Activated B cell treated with CpG ODN at 0.5 μM for 24 hours (primary cell): ENCODE measurements at regions of chr15 and their contacts with region 1.

Region 1: GRCh38 chr15:99565299-99566156 is at the start of gene MEF2A:
- DNase-seq: peak; percentile 90
- ATAC-seq: peak; percentile 65
- H3K4me3 Mint-ChIP-seq: peak within 1 kb of the TSS; percentile 100
- H3K27ac Mint-ChIP-seq: peak within 1 kb of the TSS; percentile 99
- H3K4me1 Mint-ChIP-seq: peaks cover 55% of the 10 kb centered on the region
- H3K27me3 Mint-ChIP-seq: no peaks in the 10 kb centered on the region
- CTCF ChIP-seq: no peak
- total RNA-seq, gene MEF2A: 75.7 and 88.3 TPM in 2 replicates

Region 2: DNA sequence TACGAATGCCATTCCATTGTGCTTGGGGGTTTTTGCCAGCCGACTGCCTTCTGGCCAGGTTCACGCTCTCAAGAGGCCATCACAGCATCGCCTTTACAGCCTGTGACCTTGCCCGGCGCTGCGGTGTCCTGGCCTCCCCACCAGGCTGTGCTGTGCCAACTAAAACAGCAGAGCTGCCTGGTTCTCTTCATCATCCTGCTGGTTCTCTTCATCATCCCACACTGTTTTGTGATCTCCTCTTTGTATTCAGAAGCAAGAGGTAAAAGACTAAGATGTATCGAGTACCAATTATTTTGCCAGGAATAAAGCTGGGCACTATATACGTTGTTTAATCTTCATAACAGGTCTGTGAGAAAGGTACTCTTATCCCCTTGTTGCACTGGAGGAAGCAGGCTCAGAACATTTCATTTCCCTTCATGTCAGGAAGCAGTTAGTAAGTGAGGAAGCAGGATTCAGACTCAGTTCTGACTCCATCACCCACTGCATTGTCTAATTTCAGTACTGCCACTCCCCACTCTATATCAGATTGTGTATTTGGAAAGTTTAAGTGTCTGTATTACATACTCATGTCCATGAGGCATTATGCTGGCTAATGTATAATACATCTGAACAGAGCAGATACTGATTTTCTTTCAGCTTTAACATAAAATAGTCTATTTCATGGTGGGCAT is 221.5 kb before region 1 on chr15:
- CTCF ChIA-PET with region 1: no interaction called
- POLR2A ChIA-PET with region 1: interaction called, 6 read pairs
- intact Hi-C with region 1: loop called (anchors 1 kb)
- DNase-seq: peak; percentile 20
- ATAC-seq: peak; percentile 61
- H3K4me3 Mint-ChIP-seq: no peak overlapping the region
- H3K27ac Mint-ChIP-seq: no peak overlapping the region
- H3K4me1 Mint-ChIP-seq: peaks cover 31% of the 10 kb centered on the region
- H3K27me3 Mint-ChIP-seq: no peaks in the 10 kb centered on the region
- CTCF ChIP-seq: no peak

Region 3: GRCh38 chr15:99476413-99477222 is 88.9 kb before region 1 on chr15:
- CTCF ChIA-PET with region 1: no interaction called
- POLR2A ChIA-PET with region 1: interaction called, 14 read pairs
- intact Hi-C with region 1: no loop called
- DNase-seq: peak; percentile 60
- ATAC-seq: peak; percentile 84
- H3K4me3 Mint-ChIP-seq: peak overlapping the region; percentile 11
- H3K27ac Mint-ChIP-seq: peak overlapping the region; percentile 31
- H3K4me1 Mint-ChIP-seq: peaks cover 52% of the 10 kb centered on the region
- H3K27me3 Mint-ChIP-seq: no peaks in the 10 kb centered on the region
- CTCF ChIP-seq: no peak

Region 4: GRCh38 chr15:99507504-99508310 is 57.8 kb before region 1 on chr15:
- CTCF ChIA-PET with region 1: interaction called, 24 read pairs
- POLR2A ChIA-PET with region 1: interaction called, 247 read pairs
- intact Hi-C with region 1: loop called (anchors 1 kb)
- DNase-seq: no peak
- ATAC-seq: no peak
- H3K4me3 Mint-ChIP-seq: peak overlapping the region; percentile 50
- H3K27ac Mint-ChIP-seq: peak overlapping the region; percentile 97
- H3K4me1 Mint-ChIP-seq: peaks cover 96% of the 10 kb centered on the region
- H3K27me3 Mint-ChIP-seq: no peaks in the 10 kb centered on the region
- CTCF ChIP-seq: no peak

Region 5: GRCh38 chr15:99613887-99614647 is 48.5 kb after region 1 on chr15:
- CTCF ChIA-PET with region 1: no interaction called
- POLR2A ChIA-PET with region 1: interaction called, 7 read pairs
- intact Hi-C with region 1: loop called (anchors 1 kb)
- DNase-seq: no peak
- ATAC-seq: no peak
- H3K4me3 Mint-ChIP-seq: peak overlapping the region; percentile 50
- H3K27ac Mint-ChIP-seq: peak overlapping the region; percentile 72
- H3K4me1 Mint-ChIP-seq: peaks cover 74% of the 10 kb centered on the region
- H3K27me3 Mint-ChIP-seq: no peaks in the 10 kb centered on the region
- CTCF ChIP-seq: no peak

Region 6: GRCh38 chr15:99733268-99734039 is 167.9 kb after region 1 on chr15 and contains the start of gene LYSMD4:
- CTCF ChIA-PET with region 1: no interaction called
- POLR2A ChIA-PET with region 1: interaction called, 5 read pairs
- intact Hi-C with region 1: loop called (anchors 1 kb)
- DNase-seq: peak; percentile 95
- ATAC-seq: peak; percentile 99
- H3K4me3 Mint-ChIP-seq: peak within 1 kb of the TSS; percentile 85
- H3K27ac Mint-ChIP-seq: peak within 1 kb of the TSS; percentile 83
- H3K4me1 Mint-ChIP-seq: peaks cover 14% of the 10 kb centered on the region
- H3K27me3 Mint-ChIP-seq: no peaks in the 10 kb centered on the region
- CTCF ChIP-seq: no peak
- total RNA-seq, gene LYSMD4: 4.7 and 6.1 TPM in 2 replicates